B cell (primary cell): ENCODE measurements at regions of chr15 and their contacts with region 1.

Region 1: GRCh38 chr15:83011271-83012075 is at the start of gene C15orf40:
- DNase-seq: peak; percentile 94
- ATAC-seq: peak; percentile 91
- H3K4me3 ChIP-seq: peak within 1 kb of the TSS; percentile 90 to 99 (median 92)
- H3K4me3 Mint-ChIP-seq: peak within 1 kb of the TSS; percentile 96
- H3K27ac ChIP-seq: peak within 1 kb of the TSS; percentile 69 to 83
- H3K27ac Mint-ChIP-seq: peak within 1 kb of the TSS; percentile 92
- H3K4me1 ChIP-seq: peaks cover 22 to 24% of the 10 kb centered on the region in 2 donors
- H3K4me1 Mint-ChIP-seq: peaks cover 50% of the 10 kb centered on the region
- H3K27me3 ChIP-seq: no peaks in the 10 kb centered on the region
- H3K27me3 Mint-ChIP-seq: no peaks in the 10 kb centered on the region
- CTCF ChIP-seq: no peak
- total RNA-seq, gene C15orf40: 39.5 and 40.7 TPM in 2 replicates

Region 2: GRCh38 chr15:82680200-82681102 is 331.0 kb before region 1 on chr15:
- CTCF ChIA-PET with region 1: no interaction called
- POLR2A ChIA-PET with region 1: no interaction called
- intact Hi-C with region 1: loop called (anchors 1 kb)
- DNase-seq: peak; percentile 85
- ATAC-seq: peak; percentile 91
- H3K4me3 ChIP-seq: peak overlapping the region in 4 of 5 experiments; percentile 61 to 84 (median 72)
- H3K4me3 Mint-ChIP-seq: peak overlapping the region; percentile 92
- H3K27ac ChIP-seq: peak overlapping the region; percentile 46 to 65
- H3K27ac Mint-ChIP-seq: peak overlapping the region; percentile 87
- H3K4me1 ChIP-seq: peaks cover 14 to 15% of the 10 kb centered on the region in 2 donors
- H3K4me1 Mint-ChIP-seq: peaks cover 12% of the 10 kb centered on the region
- H3K27me3 ChIP-seq: peaks cover 0 to 21% (median 6%) of the 10 kb centered on the region in 4 experiments
- H3K27me3 Mint-ChIP-seq: peaks cover 6% of the 10 kb centered on the region
- CTCF ChIP-seq: peak; percentile 21

Region 3: DNA sequence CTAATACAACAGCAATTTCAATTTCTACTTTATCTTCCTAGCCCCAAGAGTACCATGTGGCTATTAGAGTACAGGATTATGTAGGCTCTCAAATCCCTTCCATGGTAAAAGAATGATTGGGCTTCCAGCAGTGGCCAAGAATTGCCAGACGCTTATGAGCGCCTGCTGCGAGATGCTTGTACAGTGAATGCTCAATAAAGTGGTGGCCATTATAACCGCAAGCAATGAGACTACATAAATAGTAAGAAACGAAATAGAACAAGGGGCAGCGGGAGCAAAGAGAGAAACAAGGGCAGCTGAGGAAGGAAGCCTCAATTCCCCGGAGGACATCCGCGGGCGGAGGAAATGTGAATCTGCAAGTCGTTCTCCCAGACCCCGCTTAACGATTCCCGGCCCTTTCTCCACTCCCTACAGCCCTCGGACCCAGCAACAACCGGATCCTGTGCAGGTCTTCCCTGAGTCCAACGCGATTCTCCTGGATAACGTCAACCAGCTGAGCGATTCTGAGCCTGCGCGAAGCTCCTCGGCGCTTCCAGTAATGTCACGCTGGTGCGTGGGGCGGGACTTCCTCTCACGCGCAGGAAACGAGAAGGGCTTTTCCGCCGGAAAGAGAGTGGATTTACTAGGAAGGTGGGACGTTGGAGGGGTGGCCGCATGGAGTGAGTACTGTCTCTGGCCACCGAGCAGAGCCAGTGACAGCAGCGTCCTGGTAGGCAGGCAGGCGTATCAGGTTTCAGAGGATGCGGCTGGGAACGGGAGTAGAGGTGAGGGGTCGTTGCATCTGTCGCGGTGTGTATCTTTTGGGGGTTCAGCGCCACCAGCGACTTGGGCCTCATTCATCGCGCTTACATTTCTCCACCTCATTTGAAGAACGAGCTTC is 261.3 kb before region 1 on chr15:
- CTCF ChIA-PET with region 1: interaction called, 7 read pairs
- POLR2A ChIA-PET with region 1: no interaction called
- intact Hi-C with region 1: loop called (anchors 2 kb)
- DNase-seq: peak; percentile 86
- ATAC-seq: peak; percentile 95
- H3K4me3 ChIP-seq: peak overlapping the region; percentile 75 to 97 (median 79)
- H3K4me3 Mint-ChIP-seq: peak overlapping the region; percentile 98
- H3K27ac ChIP-seq: peak overlapping the region; percentile 72 to 82
- H3K27ac Mint-ChIP-seq: peak overlapping the region; percentile 90
- H3K4me1 ChIP-seq: peaks cover 16 to 20% of the 10 kb centered on the region in 2 donors
- H3K4me1 Mint-ChIP-seq: peaks cover 41% of the 10 kb centered on the region
- H3K27me3 ChIP-seq: no peaks in the 10 kb centered on the region
- H3K27me3 Mint-ChIP-seq: no peaks in the 10 kb centered on the region
- CTCF ChIP-seq: no peak

Region 4: GRCh38 chr15:82985688-82986441 is 25.6 kb before region 1 on chr15 and contains the start of gene RAMAC:
- CTCF ChIA-PET with region 1: interaction called, 15 read pairs
- POLR2A ChIA-PET with region 1: interaction called, 18 read pairs
- intact Hi-C with region 1: loop called (anchors 1 kb)
- DNase-seq: peak; percentile 97
- ATAC-seq: peak; percentile 94
- H3K4me3 ChIP-seq: peak within 1 kb of the TSS; percentile 77 to 92 (median 82)
- H3K4me3 Mint-ChIP-seq: peak within 1 kb of the TSS; percentile 100
- H3K27ac ChIP-seq: peak within 1 kb of the TSS; percentile 65 to 83
- H3K27ac Mint-ChIP-seq: peak within 1 kb of the TSS; percentile 97
- H3K4me1 ChIP-seq: peaks cover 12 to 17% of the 10 kb centered on the region in 2 donors
- H3K4me1 Mint-ChIP-seq: peaks cover 24% of the 10 kb centered on the region
- H3K27me3 ChIP-seq: no peaks in the 10 kb centered on the region
- H3K27me3 Mint-ChIP-seq: no peaks in the 10 kb centered on the region
- CTCF ChIP-seq: no peak
- total RNA-seq, gene RAMAC: 20.2 and 20.8 TPM in 2 replicates

Region 5: DNA sequence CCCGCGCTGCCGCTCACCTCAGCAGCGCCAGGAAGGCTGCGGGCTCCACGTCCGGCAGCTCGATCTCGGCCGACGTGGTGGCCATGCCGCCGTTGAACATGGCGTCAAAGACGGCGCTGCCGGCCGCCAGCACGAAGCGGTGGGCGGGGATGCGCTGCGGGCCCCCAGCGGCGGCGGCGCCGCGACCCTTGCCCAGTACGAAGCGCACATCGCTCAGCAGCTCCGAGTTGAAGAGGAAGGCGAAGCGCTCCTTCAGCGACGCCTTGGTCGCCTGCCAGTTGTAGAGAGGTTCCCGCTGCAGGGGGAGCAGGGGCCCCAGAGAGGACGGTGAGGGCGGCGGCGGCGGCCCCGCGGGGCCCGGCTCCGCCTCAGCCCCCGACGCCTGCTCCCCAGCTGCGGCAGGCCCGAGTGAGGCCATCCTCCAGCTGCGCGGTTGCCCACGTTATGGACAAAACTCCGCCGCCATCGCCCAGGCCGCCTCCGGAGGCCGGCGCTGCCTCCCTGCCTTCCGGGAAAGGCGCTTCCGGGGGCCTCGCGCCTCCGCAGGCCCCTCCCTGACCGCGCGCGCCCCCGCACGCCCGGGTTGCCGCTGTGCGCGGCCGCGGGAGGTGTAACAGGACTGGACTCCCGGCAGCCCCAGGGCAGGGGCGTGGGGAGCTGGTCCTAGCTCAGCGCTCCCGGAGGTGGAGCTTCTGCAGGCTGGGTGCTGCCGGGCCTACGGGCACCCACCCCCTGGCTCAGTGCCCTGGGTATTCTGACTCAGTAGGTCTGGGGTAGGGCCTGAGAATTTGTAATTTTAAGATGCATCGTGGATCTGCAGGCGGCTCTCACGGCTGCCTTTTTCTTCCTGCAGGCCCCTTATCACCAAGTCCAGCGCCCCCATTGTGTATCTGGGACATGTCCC is 55.5 kb after region 1 on chr15 and contains the start of gene BTBD1:
- CTCF ChIA-PET with region 1: interaction called, 3 read pairs
- POLR2A ChIA-PET with region 1: interaction called, 13 read pairs
- intact Hi-C with region 1: loop called (anchors 1 kb)
- DNase-seq: peak; percentile 89
- ATAC-seq: peak; percentile 93
- H3K4me3 ChIP-seq: peak within 1 kb of the TSS; percentile 54 to 87 (median 83)
- H3K4me3 Mint-ChIP-seq: peak within 1 kb of the TSS; percentile 79
- H3K27ac ChIP-seq: peak within 1 kb of the TSS; percentile 31 to 84
- H3K27ac Mint-ChIP-seq: peak within 1 kb of the TSS; percentile 80
- H3K4me1 ChIP-seq: peaks cover 39 to 41% of the 10 kb centered on the region in 2 donors
- H3K4me1 Mint-ChIP-seq: peaks cover 10% of the 10 kb centered on the region
- H3K27me3 ChIP-seq: no peaks in the 10 kb centered on the region
- H3K27me3 Mint-ChIP-seq: no peaks in the 10 kb centered on the region
- CTCF ChIP-seq: no peak
- total RNA-seq, gene BTBD1: 47.5 and 54.6 TPM in 2 replicates